MCF 10A (cell line): ENCODE measurements at regions of chr2 and their contacts with region 1.

Region 1: GRCh38 chr2:202178342-202178958 is 59.9 kb downstream of the SUMO1 start:
- DNase-seq: peak; percentile 71
- H3K4me3 Mint-ChIP-seq: no peak overlapping the region
- H3K27ac Mint-ChIP-seq: no peak overlapping the region
- H3K4me1 Mint-ChIP-seq: no peaks in the 10 kb centered on the region
- H3K27me3 Mint-ChIP-seq: no peaks in the 10 kb centered on the region
- CTCF ChIP-seq: peak; percentile 74

Region 2: DNA sequence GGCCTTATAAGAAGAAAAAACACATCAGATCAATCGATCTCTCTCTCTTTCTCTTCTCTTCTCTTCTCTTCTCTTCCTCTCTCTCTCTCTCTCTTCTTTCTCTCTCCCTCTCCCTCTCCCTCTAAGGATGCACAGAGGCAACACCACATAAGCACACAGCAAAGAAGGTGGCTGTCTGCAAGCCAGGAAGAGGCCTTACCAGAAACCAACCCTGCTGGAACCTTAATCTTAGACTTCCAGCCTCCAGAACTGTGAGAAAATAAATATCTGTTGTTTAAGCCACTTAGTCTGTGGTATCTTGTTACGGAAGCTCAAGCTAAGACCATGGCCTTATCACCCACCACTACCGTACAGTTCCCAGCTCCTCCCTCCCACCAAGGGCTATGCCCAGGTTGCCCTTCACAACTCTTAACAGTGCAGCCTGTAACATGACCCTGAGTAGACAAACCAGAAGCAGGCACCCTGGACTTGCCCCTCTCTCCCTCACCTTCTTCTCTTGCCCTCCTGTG is 510.0 kb before region 1 on chr2:
- CTCF ChIA-PET with region 1: interaction called, 5 read pairs
- POLR2A ChIA-PET with region 1: no interaction called
- intact Hi-C with region 1: loop called (anchors 5 kb)
- DNase-seq: no peak
- H3K4me3 Mint-ChIP-seq: no peak overlapping the region
- H3K27ac Mint-ChIP-seq: no peak overlapping the region
- H3K4me1 Mint-ChIP-seq: no peaks in the 10 kb centered on the region
- H3K27me3 Mint-ChIP-seq: no peaks in the 10 kb centered on the region
- CTCF ChIP-seq: no peak

Region 3: DNA sequence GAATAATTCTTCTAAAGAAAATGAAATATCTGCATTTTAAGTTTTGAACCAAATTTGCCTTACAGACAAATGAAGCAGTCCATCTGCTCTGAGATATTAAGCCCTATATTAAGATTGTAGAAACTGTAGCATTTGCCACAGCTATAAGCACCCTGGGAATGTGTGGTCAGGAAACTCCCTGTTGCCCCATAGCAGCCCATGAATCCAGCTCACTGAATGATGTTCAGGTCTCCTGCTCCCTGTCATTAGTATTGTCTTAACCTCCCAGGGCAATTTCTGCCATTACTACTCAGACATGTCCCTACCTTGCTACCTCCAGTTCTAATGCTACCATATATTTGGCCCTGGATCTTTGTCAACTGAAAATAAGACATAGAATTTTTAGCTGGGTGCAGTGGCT is 331.0 kb before region 1 on chr2:
- CTCF ChIA-PET with region 1: interaction called, 37 read pairs
- POLR2A ChIA-PET with region 1: no interaction called
- intact Hi-C with region 1: no loop called
- DNase-seq: no peak
- H3K4me3 Mint-ChIP-seq: no peak overlapping the region
- H3K27ac Mint-ChIP-seq: no peak overlapping the region
- H3K4me1 Mint-ChIP-seq: peaks cover under 1% of the 10 kb centered on the region
- H3K27me3 Mint-ChIP-seq: no peaks in the 10 kb centered on the region
- CTCF ChIP-seq: no peak

Region 4: DNA sequence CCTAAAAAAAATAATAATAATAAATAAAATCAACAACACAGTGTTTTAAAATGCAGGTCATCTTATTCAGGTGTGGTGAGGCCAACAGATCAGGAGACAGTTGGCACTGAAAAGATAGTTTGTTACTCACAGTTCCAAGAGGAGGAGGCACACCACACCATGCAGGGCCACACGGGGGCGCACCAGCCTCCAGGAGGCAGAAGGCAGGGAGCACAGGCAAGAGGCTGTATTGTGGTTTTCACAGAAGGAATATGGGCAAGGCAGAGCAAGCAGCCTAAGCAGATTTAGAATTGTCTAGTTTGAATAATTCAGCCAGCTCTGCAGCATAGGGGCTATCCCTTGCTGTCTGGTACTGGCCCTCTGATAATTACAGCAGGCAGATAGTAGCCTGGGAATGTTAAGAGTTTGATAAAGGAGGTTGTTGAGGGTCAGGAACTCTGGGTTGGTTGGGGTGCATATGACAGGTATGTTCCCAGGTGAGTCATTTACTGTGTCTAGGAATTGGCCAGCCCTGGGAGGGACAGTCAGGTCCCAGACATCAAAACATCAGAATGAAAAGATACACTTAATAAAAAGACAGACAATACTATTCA is 74.1 kb before region 1 on chr2:
- CTCF ChIA-PET with region 1: interaction called, 5 read pairs
- POLR2A ChIA-PET with region 1: no interaction called
- intact Hi-C with region 1: loop called (anchors 1 kb)
- DNase-seq: peak; percentile 69
- H3K4me3 Mint-ChIP-seq: no peak overlapping the region
- H3K27ac Mint-ChIP-seq: no peak overlapping the region
- H3K4me1 Mint-ChIP-seq: no peaks in the 10 kb centered on the region
- H3K27me3 Mint-ChIP-seq: peaks cover 18% of the 10 kb centered on the region
- CTCF ChIP-seq: peak; percentile 55

Region 5: GRCh38 chr2:202193881-202194353 is 15.5 kb after region 1 on chr2:
- CTCF ChIA-PET with region 1: interaction called, 22 read pairs
- POLR2A ChIA-PET with region 1: no interaction called
- intact Hi-C with region 1: no loop called
- DNase-seq: no peak
- H3K4me3 Mint-ChIP-seq: no peak overlapping the region
- H3K27ac Mint-ChIP-seq: no peak overlapping the region
- H3K4me1 Mint-ChIP-seq: no peaks in the 10 kb centered on the region
- H3K27me3 Mint-ChIP-seq: no peaks in the 10 kb centered on the region
- CTCF ChIP-seq: no peak

Region 6: GRCh38 chr2:202408546-202409140 is 230.2 kb after region 1 on chr2:
- CTCF ChIA-PET with region 1: no interaction called
- POLR2A ChIA-PET with region 1: no interaction called
- intact Hi-C with region 1: no loop called
- DNase-seq: no peak
- H3K4me3 Mint-ChIP-seq: no peak overlapping the region
- H3K27ac Mint-ChIP-seq: peak overlapping the region; percentile 79
- H3K4me1 Mint-ChIP-seq: peaks cover 14% of the 10 kb centered on the region
- H3K27me3 Mint-ChIP-seq: no peaks in the 10 kb centered on the region
- CTCF ChIP-seq: no peak